ENCODE measurements at regions of chr7 and their contacts with region 1.

Region 1: DNA sequence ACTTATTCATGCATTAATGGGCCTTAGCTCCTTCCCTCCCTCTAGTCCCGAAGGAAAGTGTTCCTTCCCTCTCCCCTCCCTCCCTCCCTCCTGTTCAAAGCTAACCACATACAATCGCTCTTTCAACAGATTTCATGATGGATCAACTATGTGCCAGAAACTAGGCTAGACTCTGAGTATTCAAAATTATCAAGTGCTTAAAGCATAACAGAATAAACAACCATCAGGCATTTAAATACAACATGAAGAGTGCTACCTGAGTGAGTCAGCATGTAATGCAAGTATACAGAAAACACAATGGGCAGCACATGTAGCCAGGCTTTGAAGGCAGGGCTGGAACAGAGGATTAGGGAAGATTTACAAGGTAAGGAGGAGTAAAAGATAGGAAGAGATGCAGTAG is 11.3 kb downstream of the CHCHD3 start:
- DNase-seq: no peak

Region 2: DNA sequence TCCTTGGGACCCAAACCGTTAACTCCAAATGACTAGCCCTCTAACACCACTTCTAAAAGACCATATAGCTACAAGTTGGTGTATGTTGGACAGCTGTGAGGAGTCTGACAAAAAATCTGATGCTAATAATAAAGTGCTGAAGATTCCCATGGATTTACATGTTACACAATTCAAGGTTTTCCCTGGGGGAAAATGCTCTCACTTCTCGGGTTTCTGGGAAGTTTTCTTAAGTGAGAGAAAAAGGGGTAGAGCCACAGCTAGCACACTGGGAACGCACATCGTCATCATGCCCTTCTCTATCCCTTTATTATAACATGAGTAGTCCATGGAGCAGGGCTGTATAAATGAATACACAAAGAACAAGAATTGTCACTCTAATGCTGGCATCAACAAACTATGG is 150.8 kb before region 1 on chr7:
- intact Hi-C with region 1: loop called (anchors 10 kb)
- DNase-seq: no peak

Region 3: DNA sequence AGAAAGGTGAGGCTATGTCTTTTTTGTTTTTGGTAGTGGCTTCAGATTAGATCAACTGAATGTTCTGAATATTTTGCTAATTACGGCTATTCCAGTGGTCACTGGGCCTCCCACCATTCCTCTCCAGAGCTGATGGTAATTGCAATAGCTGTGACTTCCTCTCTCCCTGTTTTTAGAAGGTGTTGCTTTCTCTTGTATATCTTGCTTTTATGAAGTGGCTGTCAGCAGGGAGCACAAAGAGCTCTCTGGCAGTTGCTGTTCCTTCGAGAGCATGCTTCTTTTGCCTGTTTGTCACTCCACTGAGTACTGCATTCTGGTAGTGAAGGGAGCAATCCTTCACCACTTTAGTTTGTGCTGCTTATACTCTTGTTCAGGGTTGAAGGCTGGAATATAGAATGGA is 315.6 kb after region 1 on chr7:
- intact Hi-C with region 1: no loop called
- DNase-seq: no peak

Measured in cardiac septum (tissue), 1 donor.